Dendritic cell treated with granulocyte-macrophage colony-stimulating factor and Interleukin-4, amounts not matched to agents 40 ng/mL and 50 ng/mL, for 4 days (primary cell): ENCODE measurements at regions of chr1 and their contacts with region 1.

Region 1: DNA sequence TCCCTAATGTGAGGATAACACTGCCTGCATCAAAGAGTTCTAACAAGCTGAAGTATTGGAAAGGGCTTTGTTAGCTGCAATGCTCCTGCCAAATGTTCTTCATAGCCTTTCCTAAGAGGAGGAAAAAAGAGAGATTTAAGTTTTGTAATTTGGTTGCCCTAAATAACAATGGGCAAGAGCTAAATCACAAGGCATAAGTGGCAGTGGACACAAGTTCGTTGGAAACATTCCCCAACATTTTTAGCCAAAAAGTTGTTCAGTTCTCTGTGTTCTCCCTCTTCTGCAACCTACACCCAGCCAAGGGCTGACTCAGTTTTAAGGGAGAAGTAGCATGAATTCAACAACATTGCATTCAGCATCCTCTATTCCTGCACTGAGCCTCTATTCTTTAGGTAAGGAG is 2.6 kb upstream of the UQCRHL start:
- H3K4me3 Mint-ChIP-seq: no peak overlapping the region
- H3K27ac Mint-ChIP-seq: no peak overlapping the region
- H3K4me1 Mint-ChIP-seq: no peaks in the 10 kb centered on the region
- H3K27me3 Mint-ChIP-seq: peaks cover 4% of the 10 kb centered on the region

Region 2: GRCh38 chr1:15627343-15627988 is 182.6 kb before region 1 on chr1:
- intact Hi-C with region 1: no loop called
- H3K4me3 Mint-ChIP-seq: no peak overlapping the region
- H3K27ac Mint-ChIP-seq: no peak overlapping the region
- H3K4me1 Mint-ChIP-seq: peaks cover 44% of the 10 kb centered on the region
- H3K27me3 Mint-ChIP-seq: no peaks in the 10 kb centered on the region

Region 3: DNA sequence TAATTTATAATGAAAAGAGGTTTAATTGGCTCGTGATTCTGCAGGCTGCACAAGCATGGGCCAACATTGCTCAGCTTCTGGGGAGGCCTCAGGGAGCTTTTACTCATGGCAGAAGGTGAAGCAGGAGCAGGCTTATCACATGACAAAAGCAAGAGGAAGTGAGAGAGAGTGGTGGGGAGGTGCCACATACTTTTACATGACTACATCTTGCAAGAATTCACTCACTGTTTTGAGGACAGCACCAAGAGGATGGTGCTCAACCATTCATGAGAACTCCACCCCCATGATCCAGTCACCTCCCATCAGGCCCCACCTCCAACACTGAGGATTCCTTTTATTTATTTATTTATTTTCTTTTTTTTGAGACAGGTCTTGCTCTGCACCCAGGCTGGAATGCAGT is 131.5 kb before region 1 on chr1:
- intact Hi-C with region 1: no loop called
- H3K4me3 Mint-ChIP-seq: no peak overlapping the region
- H3K27ac Mint-ChIP-seq: no peak overlapping the region
- H3K4me1 Mint-ChIP-seq: peaks cover 71% of the 10 kb centered on the region
- H3K27me3 Mint-ChIP-seq: no peaks in the 10 kb centered on the region

Region 4: DNA sequence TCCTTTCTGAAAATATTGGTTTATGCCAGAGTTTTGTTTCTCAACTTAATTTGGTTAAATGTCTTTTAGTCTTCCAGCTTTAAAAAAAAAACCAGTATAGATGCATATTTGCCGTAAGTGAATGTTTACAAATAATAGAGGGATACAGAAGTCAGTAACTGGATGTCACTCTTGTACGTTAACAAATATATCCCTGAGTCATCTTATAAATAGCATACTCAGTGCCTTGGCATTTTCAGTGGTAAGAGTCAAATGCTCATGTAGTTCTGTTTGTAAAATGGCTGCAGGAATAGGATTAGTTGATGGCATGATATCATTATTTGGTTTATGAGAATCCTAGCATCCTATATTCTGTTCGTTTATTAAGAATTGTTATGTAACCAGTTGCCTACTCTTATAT is 92.8 kb after region 1 on chr1:
- intact Hi-C with region 1: loop called (anchors 10 kb)
- H3K4me3 Mint-ChIP-seq: no peak overlapping the region
- H3K27ac Mint-ChIP-seq: no peak overlapping the region
- H3K4me1 Mint-ChIP-seq: peaks cover 29% of the 10 kb centered on the region
- H3K27me3 Mint-ChIP-seq: no peaks in the 10 kb centered on the region

Region 5: DNA sequence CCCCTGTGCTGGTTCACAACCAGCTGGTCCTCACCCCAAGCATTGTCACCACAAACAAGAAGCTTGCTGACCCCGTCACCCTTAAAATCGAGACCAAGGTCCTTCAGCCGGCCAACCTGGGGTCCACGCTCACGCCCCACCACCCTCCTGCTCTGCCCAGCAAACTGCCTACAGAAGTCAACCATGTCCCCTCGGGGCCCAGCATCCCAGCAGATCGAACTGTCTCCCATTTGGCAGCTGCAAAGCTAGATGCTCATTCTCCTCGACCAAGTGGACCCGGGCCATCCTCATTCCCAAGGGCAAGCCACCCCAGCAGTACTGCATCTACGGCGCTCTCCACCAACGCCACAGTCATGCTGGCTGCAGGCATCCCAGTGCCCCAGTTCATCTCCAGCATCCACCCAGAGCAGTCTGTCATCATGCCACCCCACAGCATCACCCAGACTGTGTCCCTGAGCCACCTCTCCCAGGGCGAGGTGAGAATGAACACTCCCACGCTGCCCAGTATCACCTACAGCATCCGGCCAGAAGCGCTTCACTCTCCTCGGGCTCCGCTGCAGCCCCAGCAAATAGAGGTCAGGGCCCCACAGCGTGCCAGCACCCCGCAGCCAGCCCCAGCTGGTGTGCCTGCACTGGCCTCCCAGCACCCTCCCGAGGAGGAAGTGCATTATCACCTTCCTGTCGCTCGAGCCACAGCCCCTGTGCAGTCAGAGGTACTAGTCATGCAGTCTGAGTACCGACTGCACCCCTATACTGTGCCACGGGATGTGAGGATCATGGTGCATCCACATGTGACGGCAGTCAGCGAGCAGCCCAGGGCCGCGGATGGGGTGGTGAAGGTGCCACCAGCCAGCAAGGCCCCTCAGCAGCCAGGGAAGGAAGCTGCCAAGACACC is 125.2 kb after region 1 on chr1:
- intact Hi-C with region 1: no loop called
- H3K4me3 Mint-ChIP-seq: no peak overlapping the region
- H3K27ac Mint-ChIP-seq: no peak overlapping the region
- H3K4me1 Mint-ChIP-seq: peaks cover 18% of the 10 kb centered on the region
- H3K27me3 Mint-ChIP-seq: no peaks in the 10 kb centered on the region